Naive thymus-derived CD4-positive, alpha-beta T cell (primary cell): ENCODE measurements at regions of chr10 and their contacts with region 1.

Region 1: GRCh38 chr10:5293691-5294550 is 70.8 kb upstream of the UCN3 start:
- DNase-seq: peak; percentile 52 to 78 (median 67)
- ATAC-seq: peak; percentile 60
- H3K4me3 ChIP-seq: peak overlapping the region; percentile 58
- H3K4me3 Mint-ChIP-seq: peak overlapping the region; percentile 82 to 100 (median 94)
- H3K27ac ChIP-seq: peak overlapping the region; percentile 71
- H3K27ac Mint-ChIP-seq: peak overlapping the region in 8 of 9 donors; percentile 88 to 100 (median 98)
- H3K4me1 ChIP-seq: peaks cover 47 to 49% of the 10 kb centered on the region in 2 donors
- H3K4me1 Mint-ChIP-seq: peaks cover 61 to 96% (median 80%) of the 10 kb centered on the region in 7 donors
- H3K27me3 ChIP-seq: no peaks in the 10 kb centered on the region
- H3K27me3 Mint-ChIP-seq: no peaks in the 10 kb centered on the region

Region 2: DNA sequence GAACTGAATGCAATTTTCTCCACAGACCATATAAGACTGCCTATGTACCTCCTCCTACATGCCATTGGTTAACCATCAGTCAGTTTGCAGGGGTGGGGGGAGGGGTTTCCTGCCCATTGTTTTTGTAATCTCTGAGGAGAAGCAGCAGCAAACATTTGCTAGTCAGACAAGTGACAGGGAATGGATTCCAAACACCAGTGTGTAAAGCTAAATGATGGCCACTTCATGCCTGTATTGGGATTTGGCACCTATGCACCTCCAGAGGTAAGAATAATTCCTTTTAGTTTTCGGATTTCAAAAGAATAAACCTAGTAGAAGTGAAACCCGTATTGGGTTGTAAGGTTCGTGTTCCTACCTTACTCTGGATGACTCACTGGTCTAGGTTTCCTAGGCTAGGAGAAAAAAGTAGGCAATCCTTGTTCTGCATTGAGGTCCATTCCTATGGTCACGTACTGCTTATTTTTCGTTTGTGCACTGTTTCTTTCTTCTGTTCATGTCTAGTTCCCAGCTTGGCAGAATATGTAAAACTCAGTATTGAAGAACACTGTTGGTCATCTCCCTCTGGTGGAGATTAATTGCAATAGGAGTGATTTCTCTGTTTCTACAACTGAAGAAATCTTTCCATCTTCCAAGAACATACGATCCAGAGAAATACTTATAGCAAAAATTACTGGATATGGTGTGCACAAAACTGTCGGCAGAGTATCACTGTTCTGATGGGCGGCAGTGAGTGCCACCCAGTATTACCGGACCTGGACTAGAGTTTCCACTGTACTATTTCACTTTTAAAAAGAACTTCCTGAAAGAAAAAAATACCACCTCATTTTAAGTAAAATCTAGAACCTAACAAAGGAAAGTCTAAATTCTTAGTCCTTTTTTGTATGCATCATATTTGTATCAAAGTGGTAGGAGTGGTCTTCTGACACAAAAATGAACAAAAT is 199.4 kb before region 1 on chr10 and contains the start of gene AKR1C3:
- CTCF ChIA-PET with region 1: interaction called, 3 read pairs
- POLR2A ChIA-PET with region 1: interaction called, 5 read pairs
- intact Hi-C with region 1: loop called in 1 of 2 experiments (anchors 1 kb)
- DNase-seq: peak in 6 of 9 donors; percentile 24 to 53 (median 36)
- ATAC-seq: peak; percentile 77
- H3K4me3 ChIP-seq: peak within 1 kb of the TSS; percentile 69
- H3K4me3 Mint-ChIP-seq: peak within 1 kb of the TSS; percentile 71 to 95 (median 91)
- H3K27ac ChIP-seq: no peak within 1 kb of the TSS
- H3K27ac Mint-ChIP-seq: peak within 1 kb of the TSS in 6 of 9 donors; percentile 35 to 90 (median 61)
- H3K4me1 ChIP-seq: no peaks in the 10 kb centered on the region
- H3K4me1 Mint-ChIP-seq: peaks cover 0 to 25% (median 15%) of the 10 kb centered on the region in 7 donors
- H3K27me3 ChIP-seq: no peaks in the 10 kb centered on the region
- H3K27me3 Mint-ChIP-seq: peaks cover 0 to 44% (median 13%) of the 10 kb centered on the region in 5 donors
- total RNA-seq, gene AKR1C3: 2.9 to 14.1 (median 5.8) TPM

Region 3: GRCh38 chr10:5317547-5318107 is 23.7 kb after region 1 on chr10:
- CTCF ChIA-PET with region 1: interaction called, 6 read pairs
- POLR2A ChIA-PET with region 1: interaction called, 11 read pairs
- intact Hi-C with region 1: loop called (anchors 1 kb)
- DNase-seq: peak; percentile 11 to 63 (median 54)
- ATAC-seq: peak; percentile 78
- H3K4me3 ChIP-seq: peak overlapping the region; percentile 2
- H3K4me3 Mint-ChIP-seq: peak overlapping the region; percentile 60 to 81 (median 72)
- H3K27ac ChIP-seq: no peak overlapping the region
- H3K27ac Mint-ChIP-seq: peak overlapping the region; percentile 38 to 94 (median 77)
- H3K4me1 ChIP-seq: peaks cover 18 to 19% of the 10 kb centered on the region in 2 donors
- H3K4me1 Mint-ChIP-seq: peaks cover 24 to 74% (median 48%) of the 10 kb centered on the region in 7 donors
- H3K27me3 ChIP-seq: no peaks in the 10 kb centered on the region
- H3K27me3 Mint-ChIP-seq: no peaks in the 10 kb centered on the region

Region 4: DNA sequence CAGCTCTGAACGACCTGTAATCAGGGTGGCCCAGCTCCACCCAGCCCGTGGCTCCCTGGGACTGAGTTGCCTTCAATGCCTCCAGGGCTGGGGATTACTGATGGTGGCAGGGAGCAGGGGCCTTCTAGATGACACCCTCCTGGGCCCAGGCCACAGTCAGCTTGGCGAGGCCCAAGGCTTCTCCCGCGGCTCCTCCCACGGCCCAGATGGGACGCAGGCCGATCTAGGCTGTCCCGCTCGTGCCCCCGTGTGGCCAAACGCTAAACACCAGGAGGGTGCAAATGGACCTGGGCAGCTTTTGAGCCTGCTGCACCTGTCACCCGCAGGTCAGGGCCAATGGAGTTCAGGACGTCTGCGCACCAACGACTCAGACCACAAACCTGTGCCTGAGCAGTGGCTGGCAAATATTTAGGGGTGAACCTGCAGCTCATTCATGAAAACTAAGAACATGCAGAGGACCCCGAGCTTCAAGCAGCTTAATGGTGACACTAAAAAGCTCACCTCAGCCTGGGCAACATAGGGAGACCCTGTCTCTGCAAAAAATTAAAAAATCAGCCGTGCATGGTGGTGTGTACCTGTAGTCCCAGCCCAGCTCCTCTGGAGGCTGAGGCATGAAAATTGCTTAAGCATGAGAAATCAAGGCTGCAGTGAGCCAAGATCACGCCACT is 329.3 kb after region 1 on chr10:
- CTCF ChIA-PET with region 1: no interaction called
- POLR2A ChIA-PET with region 1: no interaction called
- intact Hi-C with region 1: loop called in 1 of 2 experiments (anchors 10 kb)
- DNase-seq: peak; percentile 62 to 82 (median 70)
- ATAC-seq: peak; percentile 96
- H3K4me3 ChIP-seq: no peak overlapping the region
- H3K4me3 Mint-ChIP-seq: peak overlapping the region in 1 of 10 donors; percentile 32
- H3K27ac ChIP-seq: no peak overlapping the region
- H3K27ac Mint-ChIP-seq: peak overlapping the region in 1 of 9 donors; percentile 41
- H3K4me1 ChIP-seq: no peaks in the 10 kb centered on the region
- H3K4me1 Mint-ChIP-seq: peaks cover 0 to 4% (median 0%) of the 10 kb centered on the region in 7 donors
- H3K27me3 ChIP-seq: no peaks in the 10 kb centered on the region
- H3K27me3 Mint-ChIP-seq: peaks cover 0 to 4% (median 0%) of the 10 kb centered on the region in 5 donors